Mammary epithelial cell (primary cell): ENCODE measurements at regions of chr15 and their contacts with region 1.

Region 1: GRCh38 chr15:40906091-40906990 is 12.1 kb downstream of the VPS18 start:
- DNase-seq: peak; percentile 74
- H3K4me3 ChIP-seq: peak overlapping the region in 1 of 3 experiments; percentile 31
- H3K27ac ChIP-seq: no peak overlapping the region
- H3K4me1 ChIP-seq: peaks cover 38% of the 10 kb centered on the region
- H3K27me3 ChIP-seq: no peaks in the 10 kb centered on the region
- CTCF ChIP-seq: peak; percentile 34 to 68

Region 2: DNA sequence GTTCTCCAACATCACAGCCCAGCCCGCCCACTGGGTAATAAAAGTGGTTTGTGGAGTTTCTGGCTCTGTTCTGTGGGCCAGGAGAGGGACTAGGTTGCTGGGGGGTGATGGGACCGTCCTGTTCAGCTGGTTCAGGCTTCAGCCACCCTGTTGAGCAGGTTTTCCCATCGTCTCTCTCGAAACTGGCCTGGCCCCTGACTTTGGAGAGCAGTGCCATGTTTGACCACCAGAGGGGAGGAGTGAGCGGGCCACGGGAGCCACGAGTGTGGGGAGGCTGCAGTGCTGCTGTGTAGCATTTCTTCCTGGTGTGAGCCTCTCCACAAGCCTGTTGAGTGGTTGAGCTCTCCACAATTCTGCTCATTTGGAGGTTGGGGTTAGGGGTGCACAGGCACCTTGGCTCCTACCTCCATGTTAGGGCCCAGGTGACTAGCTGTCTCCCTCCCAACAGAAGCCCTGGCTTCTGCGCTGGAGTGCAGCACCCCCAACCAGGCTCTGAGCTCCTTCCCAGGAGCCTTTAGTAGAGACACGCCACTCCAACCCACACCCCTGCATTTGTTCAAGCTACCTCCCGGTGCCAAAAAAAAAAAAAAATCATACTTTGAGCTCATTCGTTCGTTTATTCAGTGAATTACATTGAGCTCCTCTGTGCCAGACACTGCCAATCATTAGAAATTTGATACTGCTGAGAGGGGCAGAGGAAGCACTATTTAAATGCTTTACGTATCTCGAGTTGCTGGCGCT is 48.6 kb before region 1 on chr15:
- CTCF ChIA-PET with region 1: interaction called, 13 read pairs
- dilution Hi-C with region 1: no loop called
- in situ Hi-C with region 1: no loop called
- intact Hi-C with region 1: no loop called
- DNase-seq: peak; percentile 79
- H3K4me3 ChIP-seq: no peak overlapping the region
- H3K27ac ChIP-seq: peak overlapping the region; percentile 40
- H3K4me1 ChIP-seq: no peaks in the 10 kb centered on the region
- H3K27me3 ChIP-seq: no peaks in the 10 kb centered on the region
- CTCF ChIP-seq: peak; percentile 98 to 99

Region 3: DNA sequence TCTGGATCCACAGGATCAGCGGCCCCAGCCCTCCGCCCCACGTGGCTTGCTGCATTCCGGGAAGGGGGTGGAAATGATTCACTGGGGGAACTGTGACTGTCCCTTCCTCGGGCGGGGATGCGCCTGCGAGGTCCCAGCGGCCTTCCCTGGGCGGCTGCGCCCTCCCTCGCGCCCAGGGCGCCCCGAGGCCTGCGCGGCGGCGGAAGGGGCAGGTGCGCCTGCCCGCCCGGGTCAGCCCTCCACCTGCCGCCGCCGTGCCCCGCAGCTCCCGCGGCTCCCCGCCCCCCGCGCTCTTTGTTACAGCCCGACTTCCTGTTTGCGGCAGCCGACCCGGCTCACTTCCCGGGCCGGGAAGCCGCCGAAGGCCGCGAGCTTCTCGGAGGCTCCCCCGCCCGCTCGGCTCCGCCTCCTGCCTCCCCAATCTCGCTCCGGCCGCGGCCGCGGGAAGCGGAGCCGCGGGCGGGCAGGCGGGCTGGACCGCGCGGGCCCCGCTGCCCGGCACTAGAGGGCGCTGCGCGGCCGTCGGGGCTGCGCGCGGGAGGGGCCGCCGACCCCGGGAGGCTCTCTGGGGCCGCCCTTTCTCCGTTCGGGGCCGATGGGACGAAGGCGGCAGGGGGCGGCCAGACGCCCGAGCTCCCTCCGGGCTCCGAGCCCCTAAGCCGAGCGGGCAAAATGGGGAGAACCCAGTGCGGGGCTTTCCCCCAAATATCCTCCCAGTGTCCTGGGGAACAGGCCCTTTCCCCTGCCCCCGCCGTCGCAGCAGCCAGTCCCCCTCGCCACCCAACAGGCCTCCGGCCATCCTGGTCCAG is 35.4 kb after region 1 on chr15:
- CTCF ChIA-PET with region 1: no interaction called
- dilution Hi-C with region 1: no loop called
- in situ Hi-C with region 1: no loop called
- intact Hi-C with region 1: loop called (anchors 5 kb)
- DNase-seq: peak; percentile 65
- H3K4me3 ChIP-seq: peak overlapping the region; percentile 37 to 49 (median 46)
- H3K27ac ChIP-seq: no peak overlapping the region
- H3K4me1 ChIP-seq: peaks cover 12% of the 10 kb centered on the region
- H3K27me3 ChIP-seq: no peaks in the 10 kb centered on the region
- CTCF ChIP-seq: peak; percentile 38 to 46

Region 4: DNA sequence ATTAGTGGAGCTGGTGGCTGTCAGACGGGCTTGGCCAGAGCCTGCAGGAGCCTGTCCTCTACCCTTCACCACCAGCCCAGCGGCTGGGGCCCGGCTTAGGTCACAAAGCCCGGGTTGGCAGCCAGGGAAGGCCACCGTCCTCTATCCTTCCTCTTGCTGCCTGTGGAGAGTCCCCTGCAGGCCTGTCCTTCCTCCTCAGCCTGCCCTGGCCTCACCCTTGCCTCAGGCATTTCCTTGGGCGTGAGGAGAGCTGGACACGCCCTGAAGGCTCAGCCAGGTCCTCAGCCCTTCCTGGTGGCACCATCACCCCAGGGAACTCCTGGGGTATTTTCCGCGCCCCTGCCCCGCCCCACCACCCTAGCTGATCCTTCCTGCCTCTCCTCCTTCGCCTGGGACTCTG is 54.6 kb after region 1 on chr15:
- CTCF ChIA-PET with region 1: no interaction called
- dilution Hi-C with region 1: loop called (anchors 5 kb)
- in situ Hi-C with region 1: no loop called
- intact Hi-C with region 1: no loop called
- DNase-seq: no peak
- H3K4me3 ChIP-seq: no peak overlapping the region
- H3K27ac ChIP-seq: no peak overlapping the region
- H3K4me1 ChIP-seq: peaks cover 11% of the 10 kb centered on the region
- H3K27me3 ChIP-seq: no peaks in the 10 kb centered on the region
- CTCF ChIP-seq: no peak

Region 5: DNA sequence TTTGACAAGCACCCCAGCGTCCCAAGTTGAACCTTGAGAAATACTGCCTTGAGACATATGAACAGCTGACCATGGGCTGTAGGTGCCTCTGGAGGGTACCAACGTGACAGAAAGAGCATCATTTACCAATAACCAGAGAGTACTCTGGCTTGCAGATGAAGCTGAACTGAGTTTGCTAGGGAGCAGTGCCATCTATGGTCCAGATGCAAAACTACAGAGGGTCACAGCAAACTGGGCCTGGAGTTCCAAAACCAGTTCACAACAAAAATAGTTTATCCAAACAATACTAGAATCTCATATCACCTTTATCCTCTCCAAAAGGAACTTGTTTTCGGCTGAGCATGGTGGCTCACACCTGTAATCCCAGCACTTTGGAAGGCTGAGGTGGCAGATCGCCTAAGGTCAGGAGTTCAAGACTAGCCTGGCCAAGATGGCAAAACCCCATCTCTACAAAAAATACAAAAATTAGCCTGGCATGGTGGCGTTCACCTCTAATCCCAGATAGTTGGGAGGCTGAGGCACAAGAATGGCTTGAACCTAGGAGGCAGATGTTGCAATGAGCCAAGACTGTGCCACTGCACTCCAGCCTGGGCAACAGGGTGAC is 116.2 kb after region 1 on chr15:
- CTCF ChIA-PET with region 1: no interaction called
- dilution Hi-C with region 1: no loop called
- in situ Hi-C with region 1: loop called in 1 of 2 experiments (anchors 5 kb)
- intact Hi-C with region 1: loop called (anchors 1 kb)
- DNase-seq: peak; percentile 16
- H3K4me3 ChIP-seq: no peak overlapping the region
- H3K27ac ChIP-seq: no peak overlapping the region
- H3K4me1 ChIP-seq: no peaks in the 10 kb centered on the region
- H3K27me3 ChIP-seq: no peaks in the 10 kb centered on the region
- CTCF ChIP-seq: peak; percentile 61 to 74

Region 6: DNA sequence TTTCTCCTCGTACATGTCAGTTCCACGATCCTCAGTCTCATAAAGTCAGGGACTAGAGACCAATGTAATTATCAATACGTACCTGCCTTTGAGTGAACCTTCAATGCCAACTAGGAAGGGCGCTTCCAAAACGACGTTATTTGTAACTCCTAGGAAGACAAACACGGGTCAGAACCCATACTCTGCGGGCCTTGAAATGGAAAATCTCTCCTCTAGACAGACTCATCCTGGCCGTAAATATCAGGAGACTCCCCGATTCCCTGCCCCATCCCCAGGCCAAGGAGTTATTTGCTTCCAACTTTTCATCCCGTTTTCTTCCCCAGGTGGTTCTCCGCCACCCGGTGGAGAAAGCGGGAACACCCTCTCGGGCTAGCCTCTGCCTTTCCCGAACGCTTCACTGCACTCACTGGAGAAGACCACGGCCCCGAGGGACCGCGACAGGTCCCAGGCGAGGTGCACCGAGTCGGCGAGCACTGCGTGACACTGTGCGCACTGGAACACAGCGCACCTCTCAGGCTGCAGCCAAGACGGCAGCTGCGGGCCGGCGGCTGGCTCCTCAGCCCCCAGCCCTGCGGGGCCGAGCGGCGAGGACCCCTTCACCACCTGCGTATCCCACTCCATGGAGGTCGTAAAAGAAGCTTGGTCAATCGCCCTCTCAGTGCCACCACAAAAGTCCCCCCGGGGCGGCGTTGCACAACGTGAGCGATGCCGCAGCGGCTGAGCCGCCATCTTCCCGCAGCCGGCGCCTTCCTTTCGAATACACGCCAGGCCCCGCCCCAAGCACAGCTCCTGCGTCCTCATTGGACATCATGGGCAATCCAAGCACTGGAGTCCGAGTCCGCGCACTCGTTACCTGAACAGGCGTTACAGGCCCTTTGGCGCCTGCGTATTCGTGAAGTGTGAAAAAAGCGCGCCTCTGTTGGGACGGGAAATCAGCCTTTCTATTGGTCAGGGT is 425.8 kb after region 1 on chr15 and contains the start of gene OIP5:
- CTCF ChIA-PET with region 1: no interaction called
- dilution Hi-C with region 1: no loop called
- in situ Hi-C with region 1: no loop called
- intact Hi-C with region 1: loop called (anchors 1 kb)
- DNase-seq: peak; percentile 100
- H3K4me3 ChIP-seq: peak within 1 kb of the TSS; percentile 59 to 100 (median 74)
- H3K27ac ChIP-seq: peak within 1 kb of the TSS; percentile 85
- H3K4me1 ChIP-seq: peaks cover 14% of the 10 kb centered on the region
- H3K27me3 ChIP-seq: no peaks in the 10 kb centered on the region
- CTCF ChIP-seq: peak; percentile 73 to 84
- total RNA-seq, gene OIP5: 1.3 to 8.0 TPM